Heart left ventricle (tissue), 16 donors: ENCODE measurements at regions of chr7 and their contacts with region 1.

Region 1: DNA sequence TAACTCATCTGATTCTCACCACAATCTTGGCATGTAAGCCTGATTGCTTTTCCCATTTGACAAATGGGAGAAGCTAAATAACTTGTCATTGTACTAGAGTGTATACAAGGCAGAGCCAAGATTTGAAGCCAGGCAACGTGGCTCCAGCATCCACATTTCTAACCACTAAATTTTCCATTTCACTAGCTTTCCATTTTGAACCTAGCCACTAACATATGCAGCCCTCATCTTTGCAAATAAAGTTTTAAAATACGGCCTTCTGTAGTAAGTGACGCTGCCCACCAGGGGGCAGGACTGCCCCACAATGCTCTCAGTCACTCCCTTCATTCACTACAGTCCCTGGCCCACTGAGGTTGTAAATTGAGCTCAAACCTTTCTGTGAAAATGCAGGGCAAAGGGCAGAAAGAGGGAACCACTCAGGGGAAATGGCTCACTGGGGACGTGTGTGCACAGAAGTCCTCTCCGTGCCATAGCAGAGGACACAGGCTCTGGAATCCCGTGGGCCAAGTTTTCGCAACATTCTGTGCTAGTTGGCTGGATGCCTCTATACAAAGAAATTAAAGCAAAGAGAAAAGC is 315.7 kb downstream of the TNS3 start:
- DNase-seq: peak in 4 of 5 donors; percentile 43 to 53 (median 48)
- ATAC-seq: peak; percentile 56 to 85 (median 78)
- H3K4me3 ChIP-seq: no peak overlapping the region
- H3K27ac ChIP-seq: peak overlapping the region in 3 of 12 donors; percentile 9 to 38 (median 13)
- H3K4me1 ChIP-seq: peaks cover 0 to 13% (median 2%) of the 10 kb centered on the region in 12 donors
- H3K27me3 ChIP-seq: no peaks in the 10 kb centered on the region
- CTCF ChIP-seq: peak; percentile 87 to 95 (median 91)
- POLR2A ChIP-seq: no peak

Region 2: DNA sequence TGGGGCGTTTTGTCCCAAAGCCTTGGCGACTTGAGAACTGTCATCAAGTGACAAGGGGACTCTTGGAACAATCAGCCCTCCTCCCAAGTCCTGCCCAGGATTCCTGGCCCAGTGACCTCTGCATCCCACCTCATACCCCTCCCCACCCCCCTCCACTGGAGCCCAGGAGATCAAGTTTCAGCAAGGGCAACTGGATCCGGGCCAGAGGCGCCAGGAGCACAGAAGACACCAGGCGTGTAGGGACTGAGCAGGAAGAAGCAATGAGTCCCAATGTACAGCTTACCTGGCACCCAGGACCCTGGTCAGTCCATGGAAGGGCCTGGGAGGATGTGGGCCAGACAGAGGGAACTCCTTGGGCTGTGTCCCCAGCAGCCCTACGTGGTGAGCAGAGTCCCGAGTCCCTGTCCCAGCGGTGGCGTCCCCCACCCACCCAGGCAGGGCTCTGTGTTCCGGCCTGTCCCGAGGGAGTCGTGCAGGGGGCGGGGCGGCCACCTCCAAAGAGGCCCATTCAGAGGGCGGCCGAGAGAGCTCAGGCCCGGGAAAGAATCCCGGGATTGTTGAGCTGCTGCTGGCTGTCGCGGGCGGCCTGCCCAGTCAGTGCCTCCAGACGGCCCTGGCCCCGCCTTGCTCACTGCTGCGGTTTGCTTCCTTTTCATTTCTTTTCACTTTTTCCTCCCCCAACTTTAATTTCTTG is 61.6 kb after region 1 on chr7:
- intact Hi-C with region 1: loop called in 2 of 10 experiments (anchors 5 kb)
- DNase-seq: peak; percentile 90 to 97 (median 94)
- ATAC-seq: peak; percentile 91 to 93 (median 93)
- H3K4me3 ChIP-seq: peak overlapping the region in 11 of 12 donors; percentile 21 to 59 (median 50)
- H3K27ac ChIP-seq: peak overlapping the region; percentile 83 to 95 (median 92)
- H3K4me1 ChIP-seq: peaks cover 15 to 77% (median 57%) of the 10 kb centered on the region in 12 donors
- H3K27me3 ChIP-seq: no peaks in the 10 kb centered on the region
- CTCF ChIP-seq: no peak
- POLR2A ChIP-seq: peak in 1 of 2 donors; percentile 37

Region 3: DNA sequence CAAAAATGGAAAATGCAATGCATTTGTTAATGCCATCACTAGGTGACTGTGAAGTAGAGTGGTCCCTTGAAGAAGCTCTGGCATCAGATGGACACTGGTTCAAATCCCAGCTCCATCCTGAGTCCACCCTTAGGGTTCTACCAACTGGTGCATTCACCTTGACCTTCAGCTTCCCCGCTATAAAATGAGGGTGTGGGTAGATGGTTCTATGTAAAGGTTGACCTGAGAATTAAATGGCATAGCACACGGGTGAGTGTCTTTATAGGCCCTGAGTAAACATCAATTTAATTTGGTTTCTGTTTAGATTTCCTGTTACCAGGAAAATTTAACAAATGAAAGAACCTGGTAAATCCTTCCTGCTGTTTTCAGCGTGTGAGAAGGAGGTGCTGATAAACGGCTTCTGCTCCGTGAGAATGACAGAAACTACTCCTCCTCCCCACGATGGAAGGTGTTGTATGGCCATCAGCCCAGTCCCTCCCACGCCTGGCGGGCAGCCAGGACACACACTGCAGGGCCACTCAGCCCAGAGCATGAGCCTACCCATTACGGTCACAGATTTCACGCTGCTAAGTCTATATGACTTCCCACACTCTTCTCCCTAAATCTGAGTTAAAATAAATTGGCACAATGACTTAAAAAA is 105.6 kb after region 1 on chr7:
- intact Hi-C with region 1: loop called in 1 of 10 experiments (anchors 10 kb)
- DNase-seq: peak; percentile 83 to 91 (median 85)
- ATAC-seq: peak; percentile 80 to 89 (median 88)
- H3K4me3 ChIP-seq: no peak overlapping the region
- H3K27ac ChIP-seq: peak overlapping the region in 6 of 12 donors; percentile 21 to 51 (median 33)
- H3K4me1 ChIP-seq: peaks cover 0 to 62% (median 35%) of the 10 kb centered on the region in 12 donors
- H3K27me3 ChIP-seq: no peaks in the 10 kb centered on the region
- CTCF ChIP-seq: no peak
- POLR2A ChIP-seq: no peak

Region 4: DNA sequence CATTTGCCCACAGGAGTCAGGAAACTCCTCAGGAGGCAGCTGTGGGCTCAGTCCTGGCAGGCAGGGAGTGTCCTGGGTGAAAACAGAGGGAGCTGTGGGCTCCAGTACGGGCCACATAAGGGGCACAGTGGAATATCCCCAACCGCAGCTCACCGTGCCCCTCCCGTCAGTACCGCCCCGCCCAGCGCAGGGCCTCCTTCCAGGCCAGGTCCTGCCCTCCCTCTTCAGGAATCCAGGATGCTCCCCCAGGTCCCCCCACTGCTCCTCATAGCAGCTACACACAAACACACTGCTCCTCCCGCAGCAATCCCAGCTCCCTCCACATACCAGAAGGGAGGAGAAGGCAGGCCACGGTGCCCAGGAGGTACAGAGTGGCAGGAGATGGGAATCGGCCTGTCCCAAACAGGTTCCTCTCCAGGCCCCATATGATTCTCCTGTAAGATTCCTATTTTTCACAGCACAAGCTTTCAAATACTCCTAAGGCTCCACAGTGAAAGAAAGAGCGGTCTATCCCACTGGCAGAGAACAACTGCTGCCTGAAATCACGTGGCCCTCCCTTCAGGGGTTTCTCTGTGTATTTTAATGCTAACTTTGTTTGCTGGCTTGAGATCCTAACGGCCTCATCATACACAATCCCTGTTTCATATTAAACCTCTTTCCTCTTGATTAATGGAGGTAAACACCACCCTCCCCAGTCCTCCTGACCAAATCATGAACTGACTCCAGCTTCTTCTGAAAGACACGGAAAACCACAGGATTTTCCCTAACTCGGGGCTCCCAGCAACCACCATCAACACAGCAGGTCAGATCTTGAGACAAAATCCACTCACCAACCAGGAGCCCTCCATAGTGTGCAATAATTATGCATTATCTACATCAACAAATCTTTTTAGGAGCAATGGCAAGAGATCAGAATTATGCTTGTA is 137.0 kb after region 1 on chr7:
- intact Hi-C with region 1: loop called in 1 of 10 experiments (anchors 5 kb)
- DNase-seq: no peak
- ATAC-seq: no peak
- H3K4me3 ChIP-seq: no peak overlapping the region
- H3K27ac ChIP-seq: peak overlapping the region in 1 of 12 donors; percentile 61
- H3K4me1 ChIP-seq: peaks cover 0 to 27% (median 19%) of the 10 kb centered on the region in 12 donors
- H3K27me3 ChIP-seq: no peaks in the 10 kb centered on the region
- CTCF ChIP-seq: no peak
- POLR2A ChIP-seq: no peak

Region 5: DNA sequence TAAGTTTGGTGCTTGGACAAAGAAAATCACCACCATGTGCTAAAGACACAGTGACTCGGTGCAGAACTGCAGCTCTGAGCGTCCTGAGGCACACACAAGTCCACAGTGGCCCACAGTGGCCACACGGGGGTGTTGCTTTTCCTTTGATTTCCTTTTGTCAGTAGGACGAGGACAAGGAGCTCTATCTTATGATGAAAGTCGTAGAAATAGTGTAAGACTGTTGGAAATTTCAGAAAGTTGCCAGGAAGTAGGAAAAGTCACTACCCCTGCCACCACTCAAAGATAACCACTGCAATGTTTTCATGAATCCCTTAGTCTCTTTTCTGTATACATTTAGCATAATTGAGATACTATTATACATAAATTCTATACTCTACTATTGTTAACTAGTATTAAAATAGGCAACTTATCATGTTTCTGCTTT is 169.7 kb after region 1 on chr7:
- intact Hi-C with region 1: loop called in 9 of 10 experiments (anchors 1 to 10 kb)
- DNase-seq: peak in 4 of 5 donors; percentile 68 to 83 (median 72)
- ATAC-seq: peak; percentile 82 to 92 (median 87)
- H3K4me3 ChIP-seq: no peak overlapping the region
- H3K27ac ChIP-seq: no peak overlapping the region
- H3K4me1 ChIP-seq: peaks cover 0 to 5% (median 0%) of the 10 kb centered on the region in 12 donors
- H3K27me3 ChIP-seq: no peaks in the 10 kb centered on the region
- CTCF ChIP-seq: peak; percentile 63 to 87 (median 78)
- POLR2A ChIP-seq: no peak

Region 6: DNA sequence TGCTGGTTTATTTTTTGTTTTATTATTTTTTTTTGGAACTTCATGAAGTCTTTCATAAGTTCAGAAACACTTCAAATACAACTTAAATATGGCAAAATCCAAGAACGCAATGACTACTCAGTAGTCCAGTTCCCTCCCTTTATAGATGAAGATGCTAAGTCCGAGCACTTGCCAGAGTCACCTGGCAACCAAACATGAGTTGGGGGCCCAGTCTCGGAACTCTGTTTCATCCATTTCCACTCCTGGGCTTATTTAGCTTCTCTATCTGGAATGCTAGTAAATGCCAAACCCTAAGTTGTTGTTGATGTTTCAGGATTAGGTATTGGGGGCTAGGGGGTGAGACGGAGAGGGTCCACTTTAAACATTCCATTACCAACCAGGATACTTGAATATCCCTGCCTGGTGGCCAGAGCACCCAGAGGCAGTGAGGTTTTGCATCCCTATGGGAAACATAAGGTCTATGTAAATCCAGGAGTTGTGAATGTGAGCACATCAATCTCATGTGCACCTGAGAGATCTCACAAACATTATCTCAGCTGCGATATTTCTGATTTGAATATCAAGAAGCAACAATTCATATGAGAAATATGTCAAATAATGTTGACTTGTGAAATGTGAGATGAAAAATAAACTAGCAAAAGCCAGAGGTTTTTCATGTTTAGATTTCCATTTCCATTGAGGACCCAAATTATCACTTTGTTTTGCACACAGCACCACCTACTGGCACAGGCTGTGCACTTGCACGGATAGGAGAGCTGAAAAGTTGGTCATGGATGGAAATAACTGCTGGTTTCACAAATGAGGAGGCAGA is 552.8 kb after region 1 on chr7:
- intact Hi-C with region 1: loop called (anchors 1 to 5 kb)
- DNase-seq: peak in 4 of 5 donors; percentile 59 to 74 (median 68)
- ATAC-seq: peak in 3 of 4 donors; percentile 61 to 78 (median 63)
- H3K4me3 ChIP-seq: no peak overlapping the region
- H3K27ac ChIP-seq: no peak overlapping the region
- H3K4me1 ChIP-seq: peaks cover 0 to 21% (median 8%) of the 10 kb centered on the region in 12 donors
- H3K27me3 ChIP-seq: no peaks in the 10 kb centered on the region
- CTCF ChIP-seq: peak; percentile 84 to 100 (median 92)
- POLR2A ChIP-seq: no peak